Activated CD4-positive, alpha-beta T cell treated with anti-CD3 and anti-CD28 coated beads, Interleukin-2, amount 10 ng/mL, durations not matched to agents 7 days and 5 days (primary cell): ENCODE measurements at regions of chr10 and their contacts with region 1.

Region 1: DNA sequence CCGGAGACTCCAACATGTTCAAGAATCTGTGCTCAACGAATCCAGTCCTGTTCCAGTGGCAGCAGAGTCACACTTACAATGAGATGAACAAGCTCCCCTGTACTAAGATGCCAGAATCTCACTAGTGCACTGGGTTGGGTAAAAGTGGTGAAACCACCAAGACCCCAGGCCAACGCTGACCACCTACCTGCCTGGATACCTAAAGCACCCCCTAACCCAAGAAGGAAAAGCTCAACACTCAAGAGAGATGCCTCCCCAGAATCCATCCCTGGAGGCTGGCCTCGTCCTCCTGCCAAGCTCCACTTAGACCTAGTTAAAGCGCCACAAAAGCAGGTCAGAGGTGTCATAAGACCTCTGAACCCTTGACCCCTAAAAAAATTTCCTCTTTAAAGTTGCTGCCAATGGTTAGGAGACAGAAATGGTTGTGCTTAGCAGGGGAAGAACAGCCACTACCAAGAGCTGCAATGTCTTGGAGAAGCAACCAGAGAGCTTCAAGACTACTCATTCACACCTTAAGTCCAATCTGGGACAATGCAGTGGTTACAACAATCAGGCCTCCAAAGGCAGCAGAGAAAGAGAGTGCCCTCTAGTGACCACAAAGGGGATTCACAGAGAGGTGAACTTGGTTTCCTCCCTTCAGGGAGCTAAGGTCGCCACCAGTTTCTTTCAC is 94.6 kb upstream of the MACROH2A2 start:
- DNase-seq: peak; percentile 41
- H3K4me3 Mint-ChIP-seq: no peak overlapping the region
- H3K27ac Mint-ChIP-seq: no peak overlapping the region
- H3K4me1 Mint-ChIP-seq: no peaks in the 10 kb centered on the region
- H3K27me3 Mint-ChIP-seq: peaks cover 9% of the 10 kb centered on the region

Region 2: DNA sequence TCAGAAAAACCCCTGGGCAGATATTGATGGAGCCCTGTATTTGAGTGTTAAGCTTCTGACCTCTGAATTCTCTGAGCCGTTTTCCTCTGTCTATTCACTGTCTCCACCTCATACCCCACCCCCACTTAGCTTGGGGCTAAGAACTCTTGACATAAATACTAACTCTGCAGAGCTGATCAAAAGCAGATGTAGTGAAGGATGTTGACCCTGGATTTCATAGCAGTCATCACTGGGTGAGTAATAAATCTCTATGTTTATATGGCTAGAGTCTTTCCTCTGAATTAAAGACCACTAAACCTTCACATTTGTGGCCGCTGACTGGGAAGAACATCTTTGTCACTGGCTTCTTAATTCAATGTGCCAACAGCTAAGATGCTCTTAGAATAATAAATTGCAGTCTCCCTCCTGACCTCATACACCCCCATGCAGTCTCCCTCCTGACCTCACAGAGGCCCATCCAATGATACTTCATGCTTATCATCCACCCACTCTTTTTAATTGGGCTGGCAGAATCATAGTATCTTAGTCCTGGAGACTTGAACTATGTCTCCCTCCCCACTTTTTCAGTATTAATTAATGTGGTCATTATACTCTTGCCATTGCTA is 16.6 kb after region 1 on chr10:
- CTCF ChIA-PET with region 1: interaction called, 11 read pairs
- POLR2A ChIA-PET with region 1: no interaction called
- DNase-seq: no peak
- H3K4me3 Mint-ChIP-seq: no peak overlapping the region
- H3K27ac Mint-ChIP-seq: no peak overlapping the region
- H3K4me1 Mint-ChIP-seq: peaks cover 9% of the 10 kb centered on the region
- H3K27me3 Mint-ChIP-seq: peaks cover 45% of the 10 kb centered on the region

Region 3: GRCh38 chr10:70048030-70048723 is 90.2 kb after region 1 on chr10:
- CTCF ChIA-PET with region 1: no interaction called
- POLR2A ChIA-PET with region 1: no interaction called
- DNase-seq: no peak
- H3K4me3 Mint-ChIP-seq: no peak overlapping the region
- H3K27ac Mint-ChIP-seq: no peak overlapping the region
- H3K4me1 Mint-ChIP-seq: peaks cover 6% of the 10 kb centered on the region
- H3K27me3 Mint-ChIP-seq: peaks cover 46% of the 10 kb centered on the region